ENCODE measurements at regions of chr5 and their contacts with region 1.

Region 1: DNA sequence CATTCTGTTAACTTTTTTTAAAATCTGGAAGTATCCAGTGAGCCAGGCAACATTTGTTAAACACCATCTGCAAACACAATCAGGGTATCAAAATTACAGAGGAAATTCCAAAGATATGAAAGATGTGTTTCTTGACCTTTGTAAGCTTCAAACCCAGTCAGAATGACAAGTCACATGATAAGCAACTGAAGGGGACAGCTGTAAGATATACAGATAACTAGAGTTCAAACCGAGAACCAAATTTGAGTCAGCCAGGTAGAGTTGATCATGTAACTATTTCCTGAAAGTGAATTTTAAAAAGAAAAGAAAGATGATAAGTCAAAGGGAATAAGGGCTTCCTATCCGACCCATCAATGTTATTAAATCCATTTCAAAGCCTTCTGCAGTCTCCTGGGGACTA is 196.2 kb downstream of the DEPDC1B start:
- DNase-seq: no peak
- CTCF ChIP-seq: no peak

Region 2: GRCh38 chr5:60457233-60457632 is 46.5 kb before region 1 on chr5:
- CTCF ChIA-PET with region 1: no interaction called
- POLR2A ChIA-PET with region 1: no interaction called
- DNase-seq: no peak
- CTCF ChIP-seq: no peak

Region 3: GRCh38 chr5:60517094-60517694 is 13.4 kb after region 1 on chr5:
- CTCF ChIA-PET with region 1: interaction called, 19 read pairs
- POLR2A ChIA-PET with region 1: interaction called, 8 read pairs
- DNase-seq: no peak
- CTCF ChIP-seq: no peak

Measured in GM10248 (cell line).